Left colon (tissue), 2 donors: ENCODE measurements at regions of chr16 and their contacts with region 1.

Region 1: GRCh38 chr16:68800257-68800875 is 43.0 kb upstream of the TANGO6 start:
- DNase-seq: peak; percentile 33 to 52
- ATAC-seq: peak; percentile 76

Region 2: DNA sequence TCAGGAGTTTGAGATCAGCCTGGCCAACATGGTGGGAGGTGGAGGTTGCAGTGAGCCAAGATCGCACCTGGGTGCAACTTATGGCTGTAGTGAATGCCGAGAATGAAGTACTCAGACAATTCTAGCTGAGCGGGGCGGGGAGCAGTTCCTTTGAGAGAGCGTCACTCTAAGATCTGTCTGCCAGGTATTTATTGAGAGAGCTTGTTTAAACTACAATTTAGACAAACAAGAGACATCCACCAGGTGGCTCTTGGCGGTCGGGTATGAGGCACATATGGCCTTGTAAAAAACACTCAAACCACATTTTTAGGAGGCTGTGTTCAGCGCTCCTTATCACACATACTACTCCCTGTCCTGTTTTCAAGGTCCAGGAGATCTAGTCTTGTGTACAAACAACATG is 103.9 kb before region 1 on chr16:
- intact Hi-C with region 1: loop called (anchors 10 kb)
- DNase-seq: peak; percentile 43 to 59
- ATAC-seq: peak; percentile 96